CD4-positive, alpha-beta T cell (primary cell): ENCODE measurements at regions of chr17 and their contacts with region 1.

Region 1: GRCh38 chr17:44344939-44345453 is at the start of gene GRN:
- DNase-seq: peak; percentile 71 to 91 (median 78)
- ATAC-seq: peak; percentile 99
- H3K4me3 ChIP-seq: peak within 1 kb of the TSS; percentile 88
- H3K4me3 Mint-ChIP-seq: peak within 1 kb of the TSS; percentile 95
- H3K27ac ChIP-seq: peak within 1 kb of the TSS; percentile 13 to 57
- H3K27ac Mint-ChIP-seq: peak within 1 kb of the TSS; percentile 69
- H3K4me1 ChIP-seq: peaks cover 29% of the 10 kb centered on the region
- H3K4me1 Mint-ChIP-seq: peaks cover 19% of the 10 kb centered on the region
- H3K27me3 ChIP-seq: no peaks in the 10 kb centered on the region
- H3K27me3 Mint-ChIP-seq: peaks cover 5% of the 10 kb centered on the region
- CTCF ChIP-seq: no peak
- total RNA-seq, gene GRN: 15.3 to 16.1 TPM

Region 2: DNA sequence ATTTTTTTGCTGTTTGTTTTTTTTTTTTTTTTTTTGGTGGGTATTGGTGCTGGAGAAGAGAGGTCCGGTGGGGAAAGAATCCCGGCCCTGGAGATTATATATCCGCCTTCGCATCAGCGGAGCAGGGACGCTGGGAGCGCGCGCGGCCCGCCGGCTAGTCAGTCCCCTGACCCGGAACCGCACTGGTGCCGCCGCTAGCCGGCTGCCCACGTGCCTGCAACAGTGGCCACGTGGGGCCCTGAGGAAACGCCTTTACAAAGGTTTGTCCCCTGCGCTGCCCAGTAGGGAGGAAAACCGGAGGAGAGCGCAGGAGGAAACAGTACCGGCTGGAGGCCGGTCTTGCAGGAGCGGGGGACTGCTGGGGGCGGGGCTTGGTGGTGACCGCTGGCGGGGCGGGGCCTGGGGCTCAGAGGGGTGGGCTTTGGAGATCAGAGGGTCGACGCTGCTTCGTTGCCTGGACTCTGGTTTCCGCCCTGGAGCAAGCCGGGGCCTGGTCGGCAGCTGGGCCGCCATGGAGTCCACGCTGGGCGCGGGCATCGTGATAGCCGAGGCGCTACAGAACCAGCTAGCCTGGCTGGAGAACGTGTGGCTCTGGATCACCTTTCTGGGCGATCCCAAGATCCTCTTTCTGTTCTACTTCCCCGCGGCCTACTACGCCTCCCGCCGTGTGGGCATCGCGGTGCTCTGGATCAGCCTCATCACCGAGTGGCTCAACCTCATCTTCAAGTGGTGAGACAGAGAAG is 274.4 kb before region 1 on chr17 and contains the start of gene G6PC3:
- CTCF ChIA-PET with region 1: interaction called, 3 read pairs
- POLR2A ChIA-PET with region 1: no interaction called
- intact Hi-C with region 1: loop called in 1 of 2 experiments (anchors 5 kb)
- DNase-seq: peak; percentile 34 to 88 (median 60)
- ATAC-seq: peak; percentile 32
- H3K4me3 ChIP-seq: peak within 1 kb of the TSS; percentile 77
- H3K4me3 Mint-ChIP-seq: peak within 1 kb of the TSS; percentile 95
- H3K27ac ChIP-seq: peak within 1 kb of the TSS; percentile 61 to 71
- H3K27ac Mint-ChIP-seq: peak within 1 kb of the TSS; percentile 91
- H3K4me1 ChIP-seq: peaks cover 37% of the 10 kb centered on the region
- H3K4me1 Mint-ChIP-seq: peaks cover 49% of the 10 kb centered on the region
- H3K27me3 ChIP-seq: no peaks in the 10 kb centered on the region
- H3K27me3 Mint-ChIP-seq: no peaks in the 10 kb centered on the region
- CTCF ChIP-seq: no peak
- total RNA-seq, gene G6PC3: 5.6 to 5.8 TPM

Region 3: DNA sequence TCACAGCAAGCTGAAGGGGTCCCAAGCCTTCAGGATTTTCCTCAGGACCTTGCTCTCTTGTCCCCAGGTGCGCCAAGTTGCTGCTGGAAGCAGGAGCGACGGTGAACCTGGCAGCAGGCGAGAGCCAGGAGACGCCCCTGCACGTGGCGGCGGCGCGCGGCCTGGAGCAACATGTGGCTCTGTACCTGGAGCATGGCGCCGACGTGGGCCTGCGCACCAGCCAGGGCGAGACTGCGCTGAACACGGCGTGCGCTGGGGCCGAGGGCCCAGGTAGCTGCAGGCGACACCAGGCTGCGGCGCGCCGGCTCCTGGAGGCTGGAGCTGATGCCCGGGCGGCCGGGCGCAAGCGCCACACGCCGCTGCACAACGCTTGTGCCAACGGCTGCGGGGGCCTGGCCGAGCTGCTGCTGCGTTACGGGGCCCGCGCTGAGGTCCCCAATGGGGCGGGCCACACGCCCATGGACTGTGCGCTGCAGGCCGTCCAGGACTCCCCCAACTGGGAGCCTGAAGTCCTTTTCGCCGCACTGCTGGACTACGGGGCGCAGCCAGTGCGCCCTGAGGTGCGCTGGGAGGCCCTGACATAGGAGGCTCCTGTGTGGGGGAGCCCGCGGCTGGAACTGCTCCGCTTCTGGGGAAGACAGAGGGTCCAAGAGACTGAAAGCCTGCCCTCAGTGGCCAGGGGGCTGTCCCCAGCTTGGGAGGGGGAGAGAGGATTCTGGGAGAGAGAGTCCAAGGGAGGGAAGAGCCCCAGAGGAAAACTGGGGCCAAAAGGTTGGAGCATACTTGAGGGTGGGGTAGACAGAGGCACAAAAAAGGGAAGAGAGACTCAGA is 168.1 kb before region 1 on chr17:
- CTCF ChIA-PET with region 1: no interaction called
- POLR2A ChIA-PET with region 1: no interaction called
- intact Hi-C with region 1: no loop called
- DNase-seq: no peak
- ATAC-seq: no peak
- H3K4me3 ChIP-seq: no peak overlapping the region
- H3K4me3 Mint-ChIP-seq: no peak overlapping the region
- H3K27ac ChIP-seq: no peak overlapping the region
- H3K27ac Mint-ChIP-seq: peak overlapping the region; percentile 42
- H3K4me1 ChIP-seq: peaks cover 4% of the 10 kb centered on the region
- H3K4me1 Mint-ChIP-seq: peaks cover 3% of the 10 kb centered on the region
- H3K27me3 ChIP-seq: no peaks in the 10 kb centered on the region
- H3K27me3 Mint-ChIP-seq: no peaks in the 10 kb centered on the region
- CTCF ChIP-seq: no peak

Region 4: GRCh38 chr17:44193326-44194084 is 151.5 kb before region 1 on chr17:
- CTCF ChIA-PET with region 1: no interaction called
- POLR2A ChIA-PET with region 1: no interaction called
- intact Hi-C with region 1: no loop called
- DNase-seq: no peak
- ATAC-seq: no peak
- H3K4me3 ChIP-seq: no peak overlapping the region
- H3K4me3 Mint-ChIP-seq: peak overlapping the region; percentile 34
- H3K27ac ChIP-seq: no peak overlapping the region
- H3K27ac Mint-ChIP-seq: no peak overlapping the region
- H3K4me1 ChIP-seq: peaks cover 26% of the 10 kb centered on the region
- H3K4me1 Mint-ChIP-seq: peaks cover 26% of the 10 kb centered on the region
- H3K27me3 ChIP-seq: no peaks in the 10 kb centered on the region
- H3K27me3 Mint-ChIP-seq: no peaks in the 10 kb centered on the region
- CTCF ChIP-seq: no peak

Region 5: DNA sequence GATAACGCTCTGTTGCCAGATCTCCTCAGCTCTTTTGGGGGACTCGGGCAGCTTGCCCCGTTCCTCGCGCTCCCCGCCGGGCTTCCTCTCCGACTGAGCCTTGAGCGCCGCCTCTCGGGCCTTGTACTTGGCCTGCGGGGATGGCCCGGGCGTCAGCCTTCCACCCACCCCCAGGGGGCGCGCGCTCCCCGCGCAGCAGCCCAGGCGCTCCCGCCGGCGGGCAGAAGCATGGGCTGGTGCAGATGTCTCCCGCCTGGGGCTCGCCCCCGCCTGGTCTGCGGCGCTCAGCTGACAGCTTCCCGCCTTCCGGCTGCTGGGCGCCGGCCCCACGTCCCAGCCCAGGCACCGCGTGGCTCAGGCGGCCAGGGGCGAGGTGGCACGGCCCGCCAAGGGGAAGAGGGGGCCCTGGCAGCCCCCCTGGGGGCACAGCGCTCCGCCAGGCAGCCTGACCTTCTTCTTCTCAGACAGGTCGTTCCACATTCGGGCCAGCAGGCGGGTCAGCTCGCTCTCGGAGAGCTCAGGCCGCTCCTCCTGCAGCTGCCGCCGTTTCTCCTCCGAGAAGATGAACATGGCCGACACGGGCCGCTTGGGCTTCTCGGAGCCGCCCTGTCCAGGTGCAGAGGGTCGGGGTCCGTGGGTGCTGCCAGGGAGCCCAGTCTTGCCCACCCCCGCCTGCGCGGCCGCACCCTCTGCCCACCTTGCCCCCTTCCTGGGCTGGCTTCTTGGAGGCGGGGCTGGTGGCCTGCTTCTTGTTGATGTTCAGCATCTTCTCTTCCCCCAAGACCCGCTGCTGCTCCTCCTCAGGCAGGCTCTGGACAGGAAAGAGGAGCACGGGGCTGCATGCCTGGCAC is 134.4 kb before region 1 on chr17:
- CTCF ChIA-PET with region 1: interaction called, 18 read pairs
- POLR2A ChIA-PET with region 1: interaction called, 6 read pairs
- intact Hi-C with region 1: loop called in 1 of 2 experiments (anchors 1 kb)
- DNase-seq: peak; percentile 83 to 96 (median 90)
- ATAC-seq: peak; percentile 97
- H3K4me3 ChIP-seq: no peak overlapping the region
- H3K4me3 Mint-ChIP-seq: peak overlapping the region; percentile 65
- H3K27ac ChIP-seq: peak overlapping the region; percentile 32 to 53
- H3K27ac Mint-ChIP-seq: peak overlapping the region; percentile 59
- H3K4me1 ChIP-seq: peaks cover 73% of the 10 kb centered on the region
- H3K4me1 Mint-ChIP-seq: peaks cover 41% of the 10 kb centered on the region
- H3K27me3 ChIP-seq: no peaks in the 10 kb centered on the region
- H3K27me3 Mint-ChIP-seq: no peaks in the 10 kb centered on the region
- CTCF ChIP-seq: peak; percentile 98

Region 6: GRCh38 chr17:44331249-44331760 is 13.7 kb before region 1 on chr17:
- CTCF ChIA-PET with region 1: interaction called, 17 read pairs
- POLR2A ChIA-PET with region 1: interaction called, 16 read pairs
- intact Hi-C with region 1: loop called in 1 of 2 experiments (anchors 2 kb)
- DNase-seq: peak; percentile 48 to 87 (median 59)
- ATAC-seq: peak; percentile 17
- H3K4me3 ChIP-seq: no peak overlapping the region
- H3K4me3 Mint-ChIP-seq: no peak overlapping the region
- H3K27ac ChIP-seq: no peak overlapping the region
- H3K27ac Mint-ChIP-seq: peak overlapping the region; percentile 43
- H3K4me1 ChIP-seq: peaks cover 14% of the 10 kb centered on the region
- H3K4me1 Mint-ChIP-seq: peaks cover 17% of the 10 kb centered on the region
- H3K27me3 ChIP-seq: no peaks in the 10 kb centered on the region
- H3K27me3 Mint-ChIP-seq: no peaks in the 10 kb centered on the region
- CTCF ChIP-seq: peak; percentile 78